Panc1 (cell line): ENCODE measurements at regions of chr1 and their contacts with region 1.

Region 1: DNA sequence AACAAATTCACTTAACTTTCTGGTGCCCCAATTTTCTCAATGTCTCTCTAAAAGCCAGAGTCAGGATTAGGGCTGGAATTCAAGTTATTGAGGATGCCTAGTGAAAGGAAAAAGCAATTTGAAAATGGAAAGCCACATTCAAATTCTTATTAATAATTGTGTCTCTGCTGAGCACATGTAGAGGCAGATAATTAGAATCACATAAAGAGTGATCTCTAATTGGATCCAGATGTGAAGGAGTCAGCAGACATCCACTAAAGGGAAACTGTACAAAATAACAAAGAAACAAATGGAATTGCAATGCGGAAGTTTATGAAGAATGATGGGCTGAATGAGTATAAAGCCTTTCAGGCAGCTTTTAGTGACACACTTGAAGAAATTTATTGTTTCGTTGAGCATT is 482.6 kb downstream of the TTLL7 start:
- DNase-seq: no peak
- ATAC-seq: no peak
- H3K4me3 ChIP-seq: no peak overlapping the region
- H3K27ac ChIP-seq: no peak overlapping the region
- H3K4me1 ChIP-seq: no peaks in the 10 kb centered on the region
- H3K27me3 ChIP-seq: no peaks in the 10 kb centered on the region
- CTCF ChIP-seq: no peak

Region 2: DNA sequence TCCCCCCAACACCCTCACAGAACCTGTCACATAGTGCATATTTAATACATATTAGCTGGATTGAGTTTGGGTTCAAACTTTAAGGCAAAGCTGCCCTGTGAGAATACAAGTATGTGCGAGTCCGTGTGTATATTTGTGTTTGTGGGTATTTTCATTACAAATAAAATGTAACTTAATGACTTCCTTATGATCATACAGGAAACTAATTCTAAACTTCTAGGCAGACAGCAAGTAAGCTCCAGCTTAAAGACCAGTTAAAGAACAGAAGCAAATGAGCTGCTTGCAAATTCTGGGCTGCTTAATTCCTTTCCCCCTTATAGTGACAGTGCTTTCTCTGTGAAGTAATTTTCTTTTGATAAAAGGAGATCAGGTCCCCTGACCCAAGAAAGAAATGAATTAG is 45.0 kb after region 1 on chr1:
- CTCF ChIA-PET with region 1: no interaction called
- POLR2A ChIA-PET with region 1: no interaction called
- in situ Hi-C with region 1: no loop called
- intact Hi-C with region 1: loop called (anchors 1 kb)
- DNase-seq: no peak
- ATAC-seq: no peak
- H3K4me3 ChIP-seq: no peak overlapping the region
- H3K27ac ChIP-seq: no peak overlapping the region
- H3K4me1 ChIP-seq: no peaks in the 10 kb centered on the region
- H3K27me3 ChIP-seq: no peaks in the 10 kb centered on the region
- CTCF ChIP-seq: no peak